GM12878 (cell line): ENCODE measurements at regions of chr4 and their contacts with region 1.

Region 1: DNA sequence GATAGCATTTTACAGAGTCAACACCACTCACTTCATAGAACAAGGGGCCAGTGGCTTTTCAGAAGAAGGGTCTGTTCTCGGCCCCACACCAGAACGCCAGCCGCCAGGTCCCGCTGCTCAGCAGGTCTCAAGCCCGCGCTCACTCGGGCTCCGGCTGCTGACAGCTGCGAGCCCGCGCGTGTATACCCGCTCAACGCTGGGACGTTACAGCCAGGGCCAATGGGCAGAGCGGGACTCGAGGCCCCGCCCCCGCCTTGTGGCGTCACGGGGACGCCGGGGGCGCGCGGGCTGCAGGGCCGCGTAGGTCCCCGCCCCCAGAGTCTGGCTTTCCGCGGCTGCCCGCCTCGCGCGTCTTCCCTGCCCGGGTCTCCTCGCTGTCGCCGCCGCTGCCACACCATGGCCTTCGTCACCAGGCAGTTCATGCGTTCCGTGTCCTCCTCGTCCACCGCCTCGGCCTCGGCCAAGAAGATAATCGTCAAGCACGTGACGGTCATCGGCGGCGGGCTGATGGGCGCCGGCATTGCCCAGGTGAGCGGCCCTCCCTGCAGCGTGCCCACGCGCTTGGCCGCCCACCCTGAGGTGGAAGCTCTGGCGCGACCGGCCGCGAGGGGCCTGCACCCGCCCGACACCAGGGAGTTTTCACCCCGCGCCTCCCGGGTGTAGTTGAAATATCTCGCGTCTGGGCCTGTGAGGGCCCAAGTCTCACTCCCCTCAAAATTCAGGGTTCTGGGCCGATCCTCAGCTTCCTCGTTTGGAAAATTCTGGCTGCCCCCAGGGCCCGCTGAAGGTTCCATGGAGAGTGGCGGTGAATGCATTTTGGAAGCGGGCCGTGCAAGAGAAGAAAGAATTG is at the start of gene HADH:
- DNase-seq: peak; percentile 64
- ATAC-seq: peak; percentile 94
- H3K4me3 ChIP-seq: peak within 1 kb of the TSS; percentile 74
- H3K27ac ChIP-seq: peak within 1 kb of the TSS; percentile 73
- H3K4me1 ChIP-seq: peaks cover 18% of the 10 kb centered on the region
- H3K27me3 ChIP-seq: no peaks in the 10 kb centered on the region
- CTCF ChIP-seq: no peak
- EP300 ChIP-seq: no peak; a peak in 1 of 4 replicates
- POLR2A ChIP-seq: peak; percentile 90
- RAD21 ChIP-seq: no peak
- polyA plus RNA-seq, gene HADH: 76.3 to 97.9 TPM

Region 2: DNA sequence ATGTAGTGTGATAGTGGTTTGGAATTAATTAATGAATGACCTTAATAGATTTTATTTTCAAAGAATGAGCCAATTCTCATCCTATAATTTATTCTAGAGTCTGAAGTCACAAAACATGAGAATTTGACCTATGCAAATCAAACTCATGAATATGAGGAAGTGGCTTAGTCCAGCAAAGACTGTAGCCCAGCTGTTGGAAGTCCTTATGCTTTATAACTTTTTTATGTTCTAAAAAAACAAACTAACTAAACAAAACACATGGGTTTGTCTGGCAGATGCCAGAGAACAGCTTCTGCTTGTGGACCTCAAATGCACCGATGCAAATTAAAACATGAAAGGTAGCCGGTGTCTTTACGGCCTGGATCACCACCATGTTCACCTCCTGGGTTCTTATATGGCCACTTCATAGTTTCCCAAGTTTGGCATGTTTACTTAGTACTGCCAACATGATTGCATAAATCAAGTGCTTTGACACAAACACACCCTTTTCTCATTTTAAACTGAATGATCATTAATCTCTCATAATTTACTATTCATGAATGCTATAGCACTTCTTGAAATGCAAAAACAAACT is 547.1 kb before region 1 on chr4:
- CTCF ChIA-PET with region 1: no interaction called
- POLR2A ChIA-PET with region 1: no interaction called
- RAD21 ChIA-PET with region 1: no interaction called
- SMC1A ChIA-PET with region 1: no interaction called
- in situ Hi-C with region 1: no loop called
- intact Hi-C with region 1: no loop called
- DNase-seq: no peak
- ATAC-seq: no peak
- H3K4me3 ChIP-seq: no peak overlapping the region
- H3K27ac ChIP-seq: no peak overlapping the region
- H3K4me1 ChIP-seq: no peaks in the 10 kb centered on the region
- H3K27me3 ChIP-seq: no peaks in the 10 kb centered on the region
- CTCF ChIP-seq: no peak
- EP300 ChIP-seq: no peak
- POLR2A ChIP-seq: no peak
- RAD21 ChIP-seq: no peak

Region 3: DNA sequence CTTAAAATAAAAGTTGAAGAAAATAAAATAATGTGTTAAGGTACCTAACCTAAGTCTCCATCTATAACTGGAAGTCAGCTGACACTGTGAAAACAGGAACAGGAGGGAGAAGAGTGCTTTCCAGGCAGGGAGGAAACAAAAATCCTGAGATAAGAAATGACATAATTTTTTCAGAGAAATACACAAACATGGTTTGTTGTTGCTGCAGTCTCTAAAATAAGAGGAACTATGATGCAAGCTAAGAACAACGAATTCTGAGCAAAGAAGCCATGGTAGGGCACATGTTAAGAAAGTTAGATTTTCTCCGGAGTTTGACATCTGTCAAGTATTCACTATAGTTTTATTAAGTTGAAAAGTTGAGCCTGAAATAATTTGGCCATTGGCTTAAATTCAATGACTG is 296.6 kb before region 1 on chr4:
- CTCF ChIA-PET with region 1: no interaction called
- POLR2A ChIA-PET with region 1: interaction called, 10 read pairs
- RAD21 ChIA-PET with region 1: no interaction called
- SMC1A ChIA-PET with region 1: no interaction called
- in situ Hi-C with region 1: no loop called
- intact Hi-C with region 1: no loop called
- DNase-seq: no peak
- ATAC-seq: no peak
- H3K4me3 ChIP-seq: no peak overlapping the region
- H3K27ac ChIP-seq: no peak overlapping the region
- H3K4me1 ChIP-seq: no peaks in the 10 kb centered on the region
- H3K27me3 ChIP-seq: no peaks in the 10 kb centered on the region
- CTCF ChIP-seq: no peak
- EP300 ChIP-seq: no peak
- POLR2A ChIP-seq: no peak
- RAD21 ChIP-seq: no peak

Region 4: GRCh38 chr4:107719922-107720722 is 269.6 kb before region 1 on chr4 and contains the start of gene PAPSS1:
- CTCF ChIA-PET with region 1: no interaction called
- POLR2A ChIA-PET with region 1: interaction called, 6 read pairs
- RAD21 ChIA-PET with region 1: no interaction called
- SMC1A ChIA-PET with region 1: no interaction called
- in situ Hi-C with region 1: no loop called
- intact Hi-C with region 1: loop called (anchors 5 kb)
- DNase-seq: peak; percentile 81
- ATAC-seq: peak; percentile 89
- H3K4me3 ChIP-seq: peak within 1 kb of the TSS; percentile 87
- H3K27ac ChIP-seq: peak within 1 kb of the TSS; percentile 54
- H3K4me1 ChIP-seq: 0 out of 2 replicates have a peak, but pooled peaks cover 3% of the 10 kb centered on the region
- H3K27me3 ChIP-seq: no peaks in the 10 kb centered on the region
- CTCF ChIP-seq: no peak
- EP300 ChIP-seq: no peak
- POLR2A ChIP-seq: peak; percentile 75
- RAD21 ChIP-seq: 0 out of 2 replicates have a peak, but pooled peaks have one; percentile 7
- polyA plus RNA-seq, gene PAPSS1: 29.8 to 35.9 TPM

Region 5: GRCh38 chr4:108320061-108320460 is 330.3 kb after region 1 on chr4:
- CTCF ChIA-PET with region 1: no interaction called
- POLR2A ChIA-PET with region 1: no interaction called
- RAD21 ChIA-PET with region 1: no interaction called
- SMC1A ChIA-PET with region 1: no interaction called
- in situ Hi-C with region 1: no loop called
- intact Hi-C with region 1: no loop called
- DNase-seq: no peak
- ATAC-seq: no peak
- H3K4me3 ChIP-seq: no peak overlapping the region
- H3K27ac ChIP-seq: no peak overlapping the region
- H3K4me1 ChIP-seq: no peaks in the 10 kb centered on the region
- H3K27me3 ChIP-seq: no peaks in the 10 kb centered on the region
- CTCF ChIP-seq: no peak
- EP300 ChIP-seq: no peak
- POLR2A ChIP-seq: no peak
- RAD21 ChIP-seq: no peak

Region 6: GRCh38 chr4:108620101-108620932 is 630.6 kb after region 1 on chr4 and contains the start of gene RPL34:
- CTCF ChIA-PET with region 1: no interaction called
- POLR2A ChIA-PET with region 1: interaction called, 3 read pairs
- RAD21 ChIA-PET with region 1: no interaction called
- SMC1A ChIA-PET with region 1: no interaction called
- in situ Hi-C with region 1: no loop called
- intact Hi-C with region 1: loop called (anchors 2 kb)
- DNase-seq: peak; percentile 98
- ATAC-seq: peak; percentile 98
- H3K4me3 ChIP-seq: peak within 1 kb of the TSS; percentile 92
- H3K27ac ChIP-seq: peak within 1 kb of the TSS; percentile 95
- H3K4me1 ChIP-seq: peaks cover 8% of the 10 kb centered on the region; the same call in 1 of the 2 replicates
- H3K27me3 ChIP-seq: no peaks in the 10 kb centered on the region
- CTCF ChIP-seq: no peak
- EP300 ChIP-seq: no peak; a peak in 1 of 4 replicates
- POLR2A ChIP-seq: peak; percentile 96
- RAD21 ChIP-seq: no peak
- polyA plus RNA-seq, gene RPL34: 6,449 to 6,697 TPM